Esophagus muscularis mucosa (tissue), 4 donors: ENCODE measurements at regions of chr21 and their contacts with region 1.

Region 1: DNA sequence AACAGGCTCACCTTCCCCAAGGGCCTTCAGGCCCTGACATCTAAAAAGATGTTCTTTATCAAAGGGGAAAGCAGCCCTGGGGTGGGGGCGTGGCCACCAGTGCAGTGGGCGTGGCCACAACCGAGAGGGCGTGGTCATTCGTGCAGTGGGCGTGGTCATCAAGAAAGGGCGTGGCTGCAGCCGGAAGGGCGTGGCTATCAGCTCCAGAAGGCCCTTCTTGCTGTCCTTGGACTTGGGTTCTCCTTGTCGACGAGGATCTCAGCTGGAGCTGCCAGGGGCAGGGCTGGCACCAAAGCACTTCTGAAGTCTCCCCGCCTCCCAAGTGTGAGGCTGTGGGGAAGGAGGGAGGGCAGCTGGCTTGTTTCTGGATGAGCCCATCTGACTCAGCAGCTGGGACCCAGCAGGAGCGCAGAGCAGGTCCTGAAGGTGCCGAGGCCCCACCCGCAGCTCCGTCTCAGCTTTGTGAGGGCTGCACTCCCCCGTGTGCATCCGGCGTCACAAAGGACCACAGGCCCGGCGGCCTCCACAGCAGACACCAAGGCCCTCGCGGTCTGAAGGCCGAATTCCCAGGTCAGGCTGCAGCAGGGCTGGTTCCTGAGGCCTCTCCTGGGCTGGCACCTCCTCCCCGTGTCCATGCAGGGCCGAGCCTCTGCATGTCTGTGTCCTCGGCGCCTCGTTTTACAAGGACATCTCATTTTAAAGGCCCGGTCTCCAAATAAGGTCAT is 12.8 kb downstream of the PDE9A start:
- DNase-seq: no peak
- H3K4me3 ChIP-seq: no peak overlapping the region
- H3K27ac ChIP-seq: peak overlapping the region; percentile 31 to 60 (median 34)
- H3K4me1 ChIP-seq: peaks cover 10 to 64% (median 57%) of the 10 kb centered on the region in 4 donors
- H3K27me3 ChIP-seq: no peaks in the 10 kb centered on the region
- CTCF ChIP-seq: no peak
- EP300 ChIP-seq: no peak
- POLR2A ChIP-seq: no peak

Region 2: DNA sequence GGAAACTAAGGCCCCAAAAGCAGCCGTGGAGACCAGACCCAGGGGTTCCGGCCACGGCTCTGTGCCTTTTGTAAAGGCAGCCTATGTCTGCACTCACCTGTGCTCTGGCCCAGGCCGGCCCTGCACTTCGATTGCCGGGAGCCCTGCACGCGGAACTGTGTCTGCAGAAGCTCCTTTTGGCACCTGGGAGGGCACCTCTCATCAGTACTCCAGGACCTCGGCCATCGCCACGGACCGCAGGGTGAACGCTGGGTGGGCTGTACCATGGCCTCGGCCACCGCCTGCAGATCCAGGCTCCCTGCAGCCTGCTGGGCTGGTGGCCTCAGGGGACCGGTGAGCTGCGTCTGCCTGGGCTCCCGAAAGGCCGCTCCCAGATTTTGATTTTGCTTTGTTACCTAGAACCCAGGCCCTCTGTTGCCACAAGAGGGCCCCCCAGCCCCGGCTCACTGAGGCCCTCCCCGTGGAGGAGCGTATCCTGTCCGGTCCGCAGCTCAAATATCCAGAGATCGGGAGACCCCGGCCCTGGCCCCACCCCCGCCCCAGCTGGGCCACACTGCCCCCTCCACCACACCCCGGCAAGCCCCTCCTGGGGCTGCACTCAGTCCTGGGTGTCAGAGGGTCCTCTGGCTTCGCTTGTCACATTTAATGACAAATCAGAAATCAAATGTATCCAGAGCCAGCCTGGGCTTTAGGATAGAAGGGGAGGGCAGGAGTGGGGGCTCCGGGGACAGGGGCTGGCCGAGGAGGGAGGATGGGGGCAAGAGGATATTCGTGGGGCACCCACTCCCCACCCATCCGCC is 73.0 kb before region 1 on chr21:
- intact Hi-C with region 1: loop called (anchors 5 kb)
- DNase-seq: no peak
- H3K4me3 ChIP-seq: peak overlapping the region; percentile 3 to 35 (median 16)
- H3K27ac ChIP-seq: no peak overlapping the region
- H3K4me1 ChIP-seq: peaks cover 7 to 21% (median 12%) of the 10 kb centered on the region in 4 donors
- H3K27me3 ChIP-seq: peaks cover 0 to 27% (median 0%) of the 10 kb centered on the region in 4 donors
- CTCF ChIP-seq: peak; percentile 63 to 89 (median 71)
- EP300 ChIP-seq: no peak
- POLR2A ChIP-seq: no peak

Region 3: DNA sequence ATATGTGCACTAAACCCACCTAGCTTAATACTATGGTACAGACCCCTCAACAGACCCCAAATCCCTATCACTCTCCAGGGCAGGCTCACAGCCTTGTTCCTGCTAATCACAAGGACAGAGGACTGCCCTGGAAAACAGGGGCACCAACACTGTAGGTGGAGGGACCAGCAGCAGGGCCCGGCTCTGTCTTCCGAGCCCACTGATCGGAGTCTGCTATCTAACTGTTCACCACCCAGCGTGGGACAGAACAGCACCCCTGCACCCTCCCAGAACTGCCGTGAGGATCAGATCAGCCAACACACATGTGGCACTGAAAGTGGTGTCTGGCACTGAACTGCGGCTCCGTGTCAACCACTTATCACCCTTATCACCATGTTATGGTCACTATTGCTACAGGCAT is 206.9 kb after region 1 on chr21:
- intact Hi-C with region 1: no loop called
- DNase-seq: no peak
- H3K4me3 ChIP-seq: no peak overlapping the region
- H3K27ac ChIP-seq: no peak overlapping the region
- H3K4me1 ChIP-seq: peaks cover 2 to 7% (median 5%) of the 10 kb centered on the region in 4 donors
- H3K27me3 ChIP-seq: no peaks in the 10 kb centered on the region
- CTCF ChIP-seq: no peak
- EP300 ChIP-seq: no peak
- POLR2A ChIP-seq: no peak